Gastrocnemius medialis (tissue), 4 donors: ENCODE measurements at regions of chr9 and their contacts with region 1.

Region 1: DNA sequence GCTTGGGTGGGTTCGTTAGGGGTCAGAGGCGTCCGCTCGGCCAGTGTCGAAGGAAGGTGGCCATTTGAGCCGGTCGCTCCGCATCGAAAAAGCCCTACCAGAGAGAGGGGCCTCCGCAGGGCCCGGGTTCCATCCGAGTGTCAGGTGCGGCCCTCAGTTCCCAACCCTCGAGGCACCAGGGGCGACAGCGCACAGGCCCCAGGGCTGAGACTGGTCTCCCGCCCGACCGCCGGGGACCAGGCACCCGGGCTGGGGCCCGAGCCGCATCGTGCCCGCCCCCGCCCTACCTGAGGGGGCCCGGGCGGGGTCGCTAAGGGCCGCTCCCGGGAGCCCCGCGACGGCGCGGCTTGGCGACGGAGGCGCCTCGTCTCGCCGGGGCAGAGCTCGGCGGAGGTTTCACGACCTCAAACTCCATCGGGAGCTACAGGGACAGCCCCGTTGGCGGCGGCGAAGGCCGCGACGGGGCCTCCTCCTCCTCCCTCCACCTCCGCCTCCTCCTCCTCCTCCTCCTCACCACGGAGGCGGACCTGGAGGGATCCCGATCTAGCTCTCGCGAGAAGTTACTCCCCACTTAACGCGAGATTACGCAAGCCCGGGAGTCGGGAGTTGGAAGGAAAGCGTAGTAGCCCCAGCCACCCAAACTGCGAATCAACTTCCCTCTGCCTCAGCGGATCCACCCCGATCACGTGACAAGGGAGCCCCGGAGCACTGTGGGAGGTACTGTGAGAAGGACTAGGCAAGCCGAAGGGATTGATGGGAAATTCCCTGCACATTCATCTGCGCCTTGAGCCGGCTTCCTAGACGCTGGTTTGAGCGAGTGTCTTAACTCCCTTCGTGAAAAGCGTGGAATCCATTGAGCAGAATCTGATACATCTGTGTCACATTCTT is at the start of gene RC3H2:
- DNase-seq: peak; percentile 98 to 99
- ATAC-seq: peak; percentile 96 to 97
- H3K4me3 ChIP-seq: peak within 1 kb of the TSS; percentile 73 to 91 (median 80)
- H3K27ac ChIP-seq: peak within 1 kb of the TSS; percentile 82 to 93 (median 88)
- H3K4me1 ChIP-seq: peaks cover 21 to 36% of the 10 kb centered on the region in 2 donors
- H3K27me3 ChIP-seq: no peaks in the 10 kb centered on the region
- CTCF ChIP-seq: no peak
- POLR2A ChIP-seq: peak; percentile 96
- total RNA-seq, gene RC3H2: 29.4 to 45.2 (median 36.6) TPM

Region 2: GRCh38 chr9:122092611-122093506 is 812.2 kb before region 1 on chr9 and contains the start of gene TTLL11:
- in situ Hi-C with region 1: no loop called
- intact Hi-C with region 1: loop called (anchors 10 kb)
- DNase-seq: peak; percentile 96
- ATAC-seq: peak; percentile 83 to 88
- H3K4me3 ChIP-seq: peak within 1 kb of the TSS; percentile 69 to 91 (median 78)
- H3K27ac ChIP-seq: peak within 1 kb of the TSS; percentile 84 to 94 (median 88)
- H3K4me1 ChIP-seq: peaks cover 48 to 63% of the 10 kb centered on the region in 2 donors
- H3K27me3 ChIP-seq: no peaks in the 10 kb centered on the region
- CTCF ChIP-seq: peak in 1 of 5 experiments; percentile 17
- POLR2A ChIP-seq: peak; percentile 85 to 86
- total RNA-seq, gene TTLL11: 12.3 to 20.5 (median 15.3) TPM

Region 3: DNA sequence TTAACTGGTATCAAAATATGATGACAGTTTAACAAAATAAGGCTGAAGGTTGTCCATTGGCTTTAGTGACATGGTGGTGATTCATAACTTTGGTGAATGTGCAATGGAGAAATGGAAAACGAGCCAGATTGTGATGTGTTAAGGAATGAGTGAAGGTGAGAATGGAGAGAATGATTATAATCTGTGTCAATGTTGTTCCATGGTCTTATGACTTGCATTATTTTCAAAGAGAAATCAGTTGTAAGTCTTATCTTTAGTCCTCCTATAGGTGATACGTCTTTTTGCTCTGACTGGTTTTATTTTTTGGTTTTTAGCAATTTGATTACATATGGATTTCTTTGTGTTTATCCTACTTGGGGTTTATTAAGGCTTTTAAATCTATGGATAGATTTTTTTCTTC is 150.2 kb before region 1 on chr9:
- in situ Hi-C with region 1: no loop called
- intact Hi-C with region 1: no loop called
- DNase-seq: no peak
- ATAC-seq: no peak
- H3K4me3 ChIP-seq: no peak overlapping the region
- H3K27ac ChIP-seq: no peak overlapping the region
- H3K4me1 ChIP-seq: no peaks in the 10 kb centered on the region
- H3K27me3 ChIP-seq: no peaks in the 10 kb centered on the region
- CTCF ChIP-seq: no peak
- POLR2A ChIP-seq: no peak

Region 4: GRCh38 chr9:122827761-122828093 is 77.3 kb before region 1 on chr9:
- in situ Hi-C with region 1: no loop called
- intact Hi-C with region 1: loop called (anchors 5 kb)
- DNase-seq: no peak
- ATAC-seq: peak in 1 of 2 donors; percentile 29
- H3K4me3 ChIP-seq: peak overlapping the region; percentile 77 to 100 (median 99)
- H3K27ac ChIP-seq: peak overlapping the region; percentile 88 to 98 (median 98)
- H3K4me1 ChIP-seq: peaks cover 14 to 16% of the 10 kb centered on the region in 2 donors
- H3K27me3 ChIP-seq: no peaks in the 10 kb centered on the region
- CTCF ChIP-seq: no peak
- POLR2A ChIP-seq: no peak

Region 5: DNA sequence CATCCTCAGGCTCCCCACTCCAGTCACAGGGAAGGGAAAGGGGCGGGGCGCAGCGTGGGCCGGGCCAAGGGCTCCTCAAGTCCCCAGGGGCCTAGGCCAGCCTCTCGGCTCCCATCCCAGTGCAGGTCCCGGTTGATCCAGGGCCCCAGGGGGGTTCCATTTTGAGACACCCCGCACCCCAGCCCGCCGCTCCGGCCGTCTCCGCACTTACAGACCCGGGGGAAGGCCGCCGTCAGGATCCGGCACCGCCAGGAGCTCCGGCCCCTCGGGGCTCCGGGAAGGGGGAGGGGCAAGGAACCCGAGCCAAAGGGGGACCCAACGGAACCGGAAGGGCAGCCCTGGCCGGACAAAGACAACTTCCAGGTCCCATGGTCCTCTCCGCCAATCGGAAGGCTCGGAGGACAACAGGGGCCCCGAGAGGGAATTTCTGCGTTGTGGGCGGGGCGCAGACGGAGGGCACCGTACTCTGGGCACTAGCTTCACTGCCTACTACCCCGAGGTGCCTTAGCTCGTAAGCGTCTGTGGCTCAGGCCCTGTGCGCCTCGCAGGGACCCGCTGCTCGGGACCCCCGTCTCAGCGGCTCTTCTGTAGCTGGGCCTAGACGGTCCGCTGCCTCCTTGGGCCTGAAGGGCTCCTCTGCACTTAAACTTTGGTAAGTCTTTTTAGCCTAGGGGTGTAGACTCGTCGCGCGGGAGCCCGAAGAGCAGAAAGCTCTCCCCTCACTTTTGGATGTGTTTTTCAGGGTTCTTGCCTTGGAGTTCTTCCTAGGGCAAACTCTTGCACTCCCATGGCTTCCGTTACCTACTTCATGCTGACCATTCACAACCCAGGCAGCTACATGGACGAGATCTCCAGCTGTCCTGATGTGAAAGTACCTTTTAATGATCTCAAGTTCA is 26.4 kb after region 1 on chr9 and contains the start of gene ZBTB26:
- in situ Hi-C with region 1: no loop called
- intact Hi-C with region 1: loop called (anchors 2 kb)
- DNase-seq: peak; percentile 93
- ATAC-seq: peak; percentile 99 to 100
- H3K4me3 ChIP-seq: peak within 1 kb of the TSS; percentile 91 to 98 (median 94)
- H3K27ac ChIP-seq: peak within 1 kb of the TSS; percentile 86 to 94 (median 90)
- H3K4me1 ChIP-seq: peaks cover 41 to 45% of the 10 kb centered on the region in 2 donors
- H3K27me3 ChIP-seq: no peaks in the 10 kb centered on the region
- CTCF ChIP-seq: peak in 1 of 5 experiments; percentile 4
- POLR2A ChIP-seq: peak; percentile 48 to 55
- total RNA-seq, gene ZBTB26: 1.6 to 6.3 (median 2.6) TPM

Region 6: GRCh38 chr9:122940603-122941559 is 35.8 kb after region 1 on chr9 and contains the start of gene RABGAP1:
- in situ Hi-C with region 1: no loop called
- intact Hi-C with region 1: loop called (anchors 1 kb)
- DNase-seq: peak; percentile 99
- ATAC-seq: peak; percentile 98
- H3K4me3 ChIP-seq: peak within 1 kb of the TSS; percentile 80 to 90 (median 86)
- H3K27ac ChIP-seq: peak within 1 kb of the TSS; percentile 87 to 95 (median 92)
- H3K4me1 ChIP-seq: peaks cover 20 to 26% of the 10 kb centered on the region in 2 donors
- H3K27me3 ChIP-seq: no peaks in the 10 kb centered on the region
- CTCF ChIP-seq: no peak
- POLR2A ChIP-seq: peak; percentile 82 to 90
- total RNA-seq, gene RABGAP1: 23.7 to 33.8 (median 26.6) TPM

Region 7: GRCh38 chr9:122991370-122991830 is 86.3 kb after region 1 on chr9:
- in situ Hi-C with region 1: no loop called
- intact Hi-C with region 1: loop called (anchors 5 kb)
- DNase-seq: peak in 1 of 2 donors; percentile 12
- ATAC-seq: peak; percentile 78 to 80
- H3K4me3 ChIP-seq: no peak overlapping the region
- H3K27ac ChIP-seq: no peak overlapping the region
- H3K4me1 ChIP-seq: no peaks in the 10 kb centered on the region
- H3K27me3 ChIP-seq: no peaks in the 10 kb centered on the region
- CTCF ChIP-seq: peak; percentile 40 to 68 (median 59)
- POLR2A ChIP-seq: no peak

Region 8: GRCh38 chr9:123164285-123164684 is 259.2 kb after region 1 on chr9:
- in situ Hi-C with region 1: no loop called
- intact Hi-C with region 1: no loop called
- DNase-seq: no peak
- ATAC-seq: no peak
- H3K4me3 ChIP-seq: no peak overlapping the region
- H3K27ac ChIP-seq: no peak overlapping the region
- H3K4me1 ChIP-seq: no peaks in the 10 kb centered on the region
- H3K27me3 ChIP-seq: no peaks in the 10 kb centered on the region
- CTCF ChIP-seq: no peak
- POLR2A ChIP-seq: no peak

Region 9: GRCh38 chr9:123246534-123246933 is 341.5 kb after region 1 on chr9:
- in situ Hi-C with region 1: no loop called
- intact Hi-C with region 1: no loop called
- DNase-seq: no peak
- ATAC-seq: no peak
- H3K4me3 ChIP-seq: no peak overlapping the region
- H3K27ac ChIP-seq: no peak overlapping the region
- H3K4me1 ChIP-seq: peaks cover 0 to 13% of the 10 kb centered on the region in 2 donors
- H3K27me3 ChIP-seq: no peaks in the 10 kb centered on the region
- CTCF ChIP-seq: no peak
- POLR2A ChIP-seq: no peak